CD14-positive monocyte (primary cell): ENCODE measurements at regions of chr12 and their contacts with region 1.

Region 1: GRCh38 chr12:117367011-117367638 is 5.7 kb upstream of the NOS1 start:
- DNase-seq: peak; percentile 30 to 59 (median 52)
- H3K4me3 ChIP-seq: no peak overlapping the region
- H3K4me3 Mint-ChIP-seq: no peak overlapping the region
- H3K27ac ChIP-seq: no peak overlapping the region
- H3K27ac Mint-ChIP-seq: no peak overlapping the region
- H3K4me1 ChIP-seq: no peaks in the 10 kb centered on the region
- H3K4me1 Mint-ChIP-seq: peaks cover 8% of the 10 kb centered on the region
- H3K27me3 ChIP-seq: peaks cover 5 to 25% of the 10 kb centered on the region in 2 donors
- H3K27me3 Mint-ChIP-seq: peaks cover 29 to 42% (median 29%) of the 10 kb centered on the region in 3 donors
- CTCF ChIP-seq: peak; percentile 95

Region 2: DNA sequence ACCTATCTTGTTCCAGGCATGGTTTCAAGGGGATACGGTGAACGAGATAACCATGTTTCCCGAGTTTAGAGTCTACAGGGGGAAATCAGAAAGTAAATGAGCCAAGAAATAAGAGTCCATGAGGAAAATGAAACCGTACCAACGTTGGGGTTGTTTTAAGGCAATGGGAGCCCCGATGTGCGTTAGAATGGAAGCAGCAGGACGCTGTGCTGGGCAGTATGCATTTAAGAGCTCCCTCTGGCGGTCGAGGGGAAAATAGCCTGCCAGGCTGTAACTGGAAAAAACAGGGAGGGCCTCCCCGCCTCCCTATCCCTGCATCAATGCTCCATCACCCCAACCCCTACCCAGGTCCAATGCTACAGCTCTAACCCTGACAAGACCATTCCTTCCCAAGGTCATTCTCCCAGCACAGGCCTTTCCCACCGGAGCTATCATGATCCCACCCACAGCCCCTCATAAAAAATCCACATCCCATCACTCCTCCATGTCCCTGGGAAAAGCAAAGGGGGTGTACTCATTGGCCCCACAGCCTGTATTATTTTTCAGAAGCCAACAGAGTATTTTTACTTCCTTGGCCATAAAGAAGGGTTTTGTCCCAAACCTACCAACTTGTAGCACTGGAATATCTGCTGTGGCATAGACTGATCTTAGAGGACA is 220.6 kb after region 1 on chr12:
- intact Hi-C with region 1: loop called (anchors 2 to 5 kb)
- DNase-seq: peak; percentile 15 to 34 (median 33)
- H3K4me3 ChIP-seq: no peak overlapping the region
- H3K4me3 Mint-ChIP-seq: no peak overlapping the region
- H3K27ac ChIP-seq: no peak overlapping the region
- H3K27ac Mint-ChIP-seq: no peak overlapping the region
- H3K4me1 ChIP-seq: no peaks in the 10 kb centered on the region
- H3K4me1 Mint-ChIP-seq: no peaks in the 10 kb centered on the region
- H3K27me3 ChIP-seq: peaks cover 9 to 12% of the 10 kb centered on the region in 2 donors
- H3K27me3 Mint-ChIP-seq: peaks cover 16 to 28% (median 20%) of the 10 kb centered on the region in 3 donors
- CTCF ChIP-seq: peak; percentile 94